OCI-LY7 (cell line): ENCODE measurements at regions of chr9 and their contacts with region 1.

Region 1: DNA sequence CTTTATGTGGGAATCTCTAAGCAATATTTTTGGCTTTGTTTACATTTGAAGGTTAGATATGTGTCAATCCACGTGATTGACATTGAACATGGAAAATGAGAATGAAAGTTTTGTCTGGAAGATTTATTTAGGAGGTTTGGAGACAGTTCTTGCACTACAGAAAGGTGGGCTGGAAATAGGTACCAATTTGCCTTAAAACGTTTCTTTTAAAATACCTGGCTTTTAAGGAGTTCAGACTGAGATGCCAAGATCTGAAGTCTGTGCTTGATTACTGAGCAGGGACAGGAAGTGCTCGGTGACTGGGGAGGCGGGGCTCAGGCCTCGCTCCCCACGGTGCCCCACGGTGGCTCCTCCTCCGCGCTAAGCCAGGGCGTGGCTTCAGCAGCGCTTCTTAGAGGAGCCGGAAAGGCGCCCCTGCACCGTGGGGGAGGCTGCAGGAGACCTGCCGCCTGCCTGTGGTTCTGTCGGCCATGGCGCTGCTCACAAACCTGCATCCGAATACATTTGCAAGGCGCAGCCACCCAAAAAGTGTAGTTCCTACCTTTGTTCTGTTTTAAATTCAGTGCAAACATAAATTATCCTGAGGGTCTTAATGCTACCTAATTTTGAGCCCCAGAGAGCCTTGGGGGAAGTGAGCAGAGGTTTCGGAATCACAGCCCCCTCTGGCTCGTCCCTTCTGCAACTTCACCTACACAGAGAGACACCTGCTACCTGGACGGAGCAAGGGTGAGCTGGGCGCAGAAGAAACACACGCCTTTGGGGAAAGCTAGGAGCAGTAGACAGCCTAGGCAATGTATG is 49.2 kb downstream of the USP20 start:
- DNase-seq: peak; percentile 97
- H3K4me3 ChIP-seq: peak overlapping the region; percentile 66
- H3K27ac ChIP-seq: peak overlapping the region; percentile 93
- H3K4me1 ChIP-seq: peaks cover 55% of the 10 kb centered on the region
- CTCF ChIP-seq: peak; percentile 31; the same call in 1 of the 2 replicates

Region 2: DNA sequence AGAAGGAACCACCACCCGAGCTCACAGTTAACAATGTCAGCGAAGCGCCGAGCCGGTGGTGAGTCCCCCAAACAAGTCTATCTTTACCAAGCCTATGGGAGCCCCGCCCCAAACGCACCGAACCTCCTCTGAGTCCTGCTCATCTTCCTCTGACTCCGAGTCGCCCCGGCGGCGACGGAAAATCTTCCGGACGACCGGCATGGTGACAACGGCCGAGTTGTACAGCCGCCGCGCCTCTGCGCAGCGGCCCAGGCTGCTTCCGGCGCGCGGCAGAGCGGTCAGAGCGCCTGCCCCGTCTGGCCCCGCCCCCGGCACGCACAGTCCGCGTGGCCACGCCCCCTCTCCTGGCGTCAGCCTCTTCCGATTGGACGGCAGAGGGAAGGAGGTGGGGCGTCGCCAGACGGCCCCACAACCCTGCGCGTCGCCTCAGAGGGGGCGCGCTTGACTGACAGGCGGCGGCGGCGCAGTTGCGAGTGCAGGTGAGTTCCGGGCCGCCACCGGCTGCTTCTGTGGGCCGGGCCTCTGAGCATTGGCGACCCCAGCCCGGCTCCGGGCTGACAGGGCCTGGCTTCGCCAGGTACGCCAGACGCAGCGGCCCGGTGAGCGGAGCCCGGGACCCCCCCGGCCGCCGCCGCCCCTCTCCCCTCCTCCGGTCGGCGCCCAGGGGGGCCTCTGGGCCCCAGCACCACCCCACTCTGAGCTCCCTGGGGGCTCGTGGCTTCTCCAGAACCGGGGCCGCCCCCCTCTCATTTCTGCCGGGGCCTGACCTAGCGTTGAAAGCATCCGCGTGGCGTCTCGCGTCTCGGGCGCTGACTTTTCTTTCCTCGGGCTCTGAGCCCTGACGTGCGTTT is 49.2 kb before region 1 on chr9 and contains the starts of genes C9orf78 and USP20:
- CTCF ChIA-PET with region 1: no interaction called
- POLR2A ChIA-PET with region 1: interaction called, 7 read pairs
- intact Hi-C with region 1: loop called (anchors 2 kb)
- DNase-seq: peak; percentile 99
- H3K4me3 ChIP-seq: peak within 1 kb of the TSS; percentile 93
- H3K27ac ChIP-seq: peak within 1 kb of the TSS; percentile 49
- H3K4me1 ChIP-seq: peaks cover 46% of the 10 kb centered on the region
- CTCF ChIP-seq: no peak
- total RNA-seq, gene C9orf78: 49.4 and 57.6 TPM in 2 replicates
- total RNA-seq, gene USP20: 14.4 and 15.5 TPM in 2 replicates

Region 3: GRCh38 chr9:129988607-129989361 is 104.4 kb after region 1 on chr9:
- CTCF ChIA-PET with region 1: no interaction called
- POLR2A ChIA-PET with region 1: interaction called, 17 read pairs
- intact Hi-C with region 1: loop called (anchors 2 kb)
- DNase-seq: peak; percentile 90
- H3K4me3 ChIP-seq: peak overlapping the region; percentile 62
- H3K27ac ChIP-seq: peak overlapping the region; percentile 96
- H3K4me1 ChIP-seq: peaks cover 82% of the 10 kb centered on the region
- CTCF ChIP-seq: no peak

Region 4: GRCh38 chr9:130235897-130236668 is 351.7 kb after region 1 on chr9:
- CTCF ChIA-PET with region 1: no interaction called
- POLR2A ChIA-PET with region 1: no interaction called
- intact Hi-C with region 1: loop called (anchors 2 kb)
- DNase-seq: peak; percentile 66
- H3K4me3 ChIP-seq: no peak overlapping the region
- H3K27ac ChIP-seq: no peak overlapping the region
- H3K4me1 ChIP-seq: peaks cover 16% of the 10 kb centered on the region
- CTCF ChIP-seq: peak; percentile 99